WTC11 (cell line): ENCODE measurements at regions of chr20 and their contacts with region 1.

Region 1: GRCh38 chr20:10536531-10536930 is 101.4 kb downstream of the SLX4IP start:
- DNase-seq: peak; percentile 58
- ATAC-seq: peak; percentile 81
- H3K4me3 Mint-ChIP-seq: no peak overlapping the region
- H3K27ac Mint-ChIP-seq: no peak overlapping the region
- H3K4me1 Mint-ChIP-seq: peaks cover 44% of the 10 kb centered on the region
- H3K27me3 Mint-ChIP-seq: no peaks in the 10 kb centered on the region
- CTCF ChIP-seq: no peak; the same call in 1 of the 2 replicates

Region 2: GRCh38 chr20:10434467-10434831 is 102.1 kb before region 1 on chr20:
- CTCF ChIA-PET with region 1: interaction called, 13 read pairs
- POLR2A ChIA-PET with region 1: no interaction called
- DNase-seq: peak; percentile 90
- ATAC-seq: peak; percentile 72
- H3K4me3 Mint-ChIP-seq: peak overlapping the region; percentile 93
- H3K27ac Mint-ChIP-seq: peak overlapping the region; percentile 98
- H3K4me1 Mint-ChIP-seq: peaks cover 38% of the 10 kb centered on the region
- H3K27me3 Mint-ChIP-seq: no peaks in the 10 kb centered on the region
- CTCF ChIP-seq: no peak

Region 3: DNA sequence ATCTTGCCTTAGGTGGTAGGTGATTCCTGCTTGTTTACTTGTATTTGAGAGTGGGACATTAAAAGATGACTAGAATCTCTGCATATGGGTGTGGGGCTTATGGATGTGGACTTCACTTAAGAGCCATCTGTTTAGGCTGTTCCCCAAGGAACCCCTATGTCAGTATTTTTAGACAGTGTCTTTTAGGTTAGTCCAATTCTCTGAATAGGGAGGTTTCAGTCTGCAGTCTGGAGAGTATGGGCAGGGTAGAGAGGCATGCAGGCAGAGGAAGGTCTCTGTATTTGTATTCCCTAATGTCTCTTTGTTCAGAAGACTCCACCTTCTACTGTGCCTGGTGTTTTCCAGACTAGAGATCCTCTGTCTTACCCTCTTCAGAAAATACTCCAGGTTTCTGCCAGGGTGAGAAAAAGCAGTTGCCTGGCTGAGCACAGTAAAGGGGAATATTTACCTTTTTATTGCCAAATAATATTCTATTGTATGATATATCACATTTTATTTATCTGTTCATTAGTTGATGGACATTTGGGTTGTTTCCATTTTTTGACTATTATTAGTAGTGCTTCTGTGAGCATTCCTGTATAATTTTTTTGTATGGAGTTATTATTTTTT is 82.3 kb before region 1 on chr20:
- CTCF ChIA-PET with region 1: no interaction called
- POLR2A ChIA-PET with region 1: no interaction called
- DNase-seq: no peak
- ATAC-seq: peak; percentile 48; the same call in 1 of the 2 replicates
- H3K4me3 Mint-ChIP-seq: no peak overlapping the region
- H3K27ac Mint-ChIP-seq: peak overlapping the region; percentile 21
- H3K4me1 Mint-ChIP-seq: peaks cover 15% of the 10 kb centered on the region
- H3K27me3 Mint-ChIP-seq: no peaks in the 10 kb centered on the region
- CTCF ChIP-seq: no peak

Region 4: DNA sequence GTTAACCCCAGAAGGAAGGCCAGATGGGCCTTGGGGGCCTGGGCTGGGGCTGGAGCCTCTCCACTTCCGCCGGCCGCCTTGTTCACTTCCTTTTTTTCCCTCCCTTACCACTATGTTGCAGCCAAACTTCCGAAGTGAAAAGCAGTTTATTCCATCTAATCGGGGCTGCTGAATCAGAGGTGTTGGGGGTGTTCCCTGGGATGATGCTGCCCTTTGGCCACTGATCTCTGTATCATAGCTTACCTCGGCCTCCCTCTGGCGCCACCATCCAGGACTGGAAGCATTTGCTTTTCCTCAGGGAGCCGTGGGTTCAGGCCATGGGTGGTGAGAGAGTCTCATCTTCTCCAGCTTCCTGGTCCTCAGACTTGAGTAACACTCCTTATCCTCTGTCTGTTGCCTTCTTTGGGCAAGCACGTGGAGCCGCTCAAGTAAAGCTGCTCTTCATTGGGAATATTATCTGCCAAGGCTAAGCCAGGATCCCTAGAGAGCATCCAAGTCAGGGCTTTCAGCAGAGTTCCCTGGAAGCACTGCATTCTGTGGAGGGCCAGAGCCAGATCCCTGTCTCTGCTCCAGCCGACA is 61.8 kb before region 1 on chr20:
- CTCF ChIA-PET with region 1: interaction called, 15 read pairs
- POLR2A ChIA-PET with region 1: no interaction called
- DNase-seq: no peak
- ATAC-seq: peak; percentile 63
- H3K4me3 Mint-ChIP-seq: no peak overlapping the region
- H3K27ac Mint-ChIP-seq: no peak overlapping the region
- H3K4me1 Mint-ChIP-seq: peaks cover 48% of the 10 kb centered on the region
- H3K27me3 Mint-ChIP-seq: no peaks in the 10 kb centered on the region
- CTCF ChIP-seq: no peak

Region 5: GRCh38 chr20:10565191-10565921 is 28.8 kb after region 1 on chr20:
- CTCF ChIA-PET with region 1: no interaction called
- POLR2A ChIA-PET with region 1: no interaction called
- DNase-seq: no peak
- ATAC-seq: no peak
- H3K4me3 Mint-ChIP-seq: no peak overlapping the region
- H3K27ac Mint-ChIP-seq: 0 out of 2 replicates have a peak overlapping the region, but pooled peaks have one; percentile 52
- H3K4me1 Mint-ChIP-seq: peaks cover 14% of the 10 kb centered on the region
- H3K27me3 Mint-ChIP-seq: no peaks in the 10 kb centered on the region
- CTCF ChIP-seq: no peak

Region 6: GRCh38 chr20:10731190-10731965 is 194.8 kb after region 1 on chr20:
- CTCF ChIA-PET with region 1: no interaction called
- POLR2A ChIA-PET with region 1: no interaction called
- DNase-seq: no peak
- ATAC-seq: no peak
- H3K4me3 Mint-ChIP-seq: no peak overlapping the region
- H3K27ac Mint-ChIP-seq: no peak overlapping the region
- H3K4me1 Mint-ChIP-seq: peaks cover 14% of the 10 kb centered on the region
- H3K27me3 Mint-ChIP-seq: peaks cover 4% of the 10 kb centered on the region; the same call in 1 of the 2 replicates
- CTCF ChIP-seq: no peak